Naive thymus-derived CD4-positive, alpha-beta T cell (primary cell): ENCODE measurements at regions of chr18 and their contacts with region 1.

Region 1: GRCh38 chr18:12744103-12744502 is 41.3 kb downstream of the PSMG2 start:
- DNase-seq: peak in 5 of 9 donors; percentile 13 to 38 (median 22)
- ATAC-seq: peak; percentile 68
- H3K4me3 ChIP-seq: no peak overlapping the region
- H3K4me3 Mint-ChIP-seq: no peak overlapping the region
- H3K27ac ChIP-seq: no peak overlapping the region
- H3K27ac Mint-ChIP-seq: no peak overlapping the region
- H3K4me1 ChIP-seq: no peaks in the 10 kb centered on the region
- H3K4me1 Mint-ChIP-seq: peaks cover 0 to 6% (median 5%) of the 10 kb centered on the region in 7 donors
- H3K27me3 ChIP-seq: no peaks in the 10 kb centered on the region
- H3K27me3 Mint-ChIP-seq: no peaks in the 10 kb centered on the region

Region 2: DNA sequence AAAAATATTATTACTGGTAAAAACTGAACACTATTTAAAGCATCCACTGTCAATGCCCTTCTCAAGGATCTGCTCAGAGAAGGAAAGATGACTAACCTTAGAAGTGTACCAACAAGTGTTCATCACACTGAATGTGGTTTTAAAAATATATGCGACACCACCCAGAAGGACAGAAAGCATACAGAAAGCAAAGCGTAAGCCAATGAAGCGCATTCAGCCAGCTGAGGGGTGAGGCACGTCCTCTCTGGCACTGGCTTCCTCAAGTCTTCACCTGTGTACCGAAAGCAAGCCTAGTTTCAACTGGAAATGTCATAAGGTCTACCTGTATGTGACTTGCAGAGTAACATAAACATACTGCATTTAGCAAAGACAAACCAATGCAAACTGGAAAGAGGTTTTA is 47.5 kb after region 1 on chr18:
- CTCF ChIA-PET with region 1: no interaction called
- POLR2A ChIA-PET with region 1: no interaction called
- intact Hi-C with region 1: loop called in 1 of 2 experiments (anchors 10 kb)
- DNase-seq: no peak
- ATAC-seq: no peak
- H3K4me3 ChIP-seq: no peak overlapping the region
- H3K4me3 Mint-ChIP-seq: no peak overlapping the region
- H3K27ac ChIP-seq: no peak overlapping the region
- H3K27ac Mint-ChIP-seq: peak overlapping the region in 3 of 9 donors; percentile 22 to 31 (median 23)
- H3K4me1 ChIP-seq: no peaks in the 10 kb centered on the region
- H3K4me1 Mint-ChIP-seq: peaks cover 0 to 17% (median 0%) of the 10 kb centered on the region in 7 donors
- H3K27me3 ChIP-seq: no peaks in the 10 kb centered on the region
- H3K27me3 Mint-ChIP-seq: no peaks in the 10 kb centered on the region

Region 3: DNA sequence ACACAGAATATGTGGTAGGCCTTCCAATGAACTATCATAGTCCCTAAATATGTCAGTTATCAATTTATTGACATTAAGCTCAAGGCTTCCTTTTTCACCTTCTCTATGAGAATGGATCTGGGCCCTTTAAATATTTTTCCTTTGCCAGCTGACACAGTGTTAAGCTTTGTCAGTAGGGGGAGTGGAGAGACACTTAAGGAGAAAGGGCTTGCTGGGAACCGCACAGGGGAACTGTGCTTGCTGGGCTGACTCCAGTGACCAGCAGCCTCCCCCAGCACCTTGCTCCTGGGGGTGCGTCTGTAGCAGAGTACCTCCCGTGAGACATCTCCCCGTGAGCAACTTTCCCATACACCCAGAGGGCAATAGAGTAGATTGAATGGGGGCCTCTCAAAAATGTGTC is 146.4 kb after region 1 on chr18:
- CTCF ChIA-PET with region 1: interaction called, 7 read pairs
- POLR2A ChIA-PET with region 1: no interaction called
- intact Hi-C with region 1: loop called (anchors 1 kb)
- DNase-seq: no peak
- ATAC-seq: no peak
- H3K4me3 ChIP-seq: no peak overlapping the region
- H3K4me3 Mint-ChIP-seq: no peak overlapping the region
- H3K27ac ChIP-seq: no peak overlapping the region
- H3K27ac Mint-ChIP-seq: no peak overlapping the region
- H3K4me1 ChIP-seq: no peaks in the 10 kb centered on the region
- H3K4me1 Mint-ChIP-seq: peaks cover 0 to 27% (median 13%) of the 10 kb centered on the region in 7 donors
- H3K27me3 ChIP-seq: peaks cover 0 to under 1% of the 10 kb centered on the region in 2 donors
- H3K27me3 Mint-ChIP-seq: peaks cover 7 to 16% (median 12%) of the 10 kb centered on the region in 5 donors